Activated CD4-positive, alpha-beta T cell treated with anti-CD3 and anti-CD28 coated beads for 36 hours (primary cell): ENCODE measurements at regions of chr20 and their contacts with region 1.

Region 1: GRCh38 chr20:18137412-18138265 is at the starts of genes KAT14 and PET117:
- DNase-seq: peak; percentile 94
- ATAC-seq: peak; percentile 91
- H3K4me3 Mint-ChIP-seq: peak within 1 kb of the TSS; percentile 74
- H3K27ac Mint-ChIP-seq: peak within 1 kb of the TSS; percentile 89
- H3K4me1 Mint-ChIP-seq: peaks cover 32% of the 10 kb centered on the region
- H3K27me3 Mint-ChIP-seq: peaks cover 1% of the 10 kb centered on the region
- total RNA-seq, gene KAT14: 17.2 to 17.9 TPM
- total RNA-seq, gene PET117: 12.0 to 18.7 TPM

Region 2: GRCh38 chr20:16729565-16730456 is 1407.8 kb before region 1 on chr20 and contains the start of gene SNRPB2:
- CTCF ChIA-PET with region 1: no interaction called
- POLR2A ChIA-PET with region 1: no interaction called
- intact Hi-C with region 1: loop called in 1 of 2 experiments (anchors 2 kb)
- DNase-seq: peak; percentile 95
- ATAC-seq: peak; percentile 95
- H3K4me3 Mint-ChIP-seq: peak within 1 kb of the TSS; percentile 95
- H3K27ac Mint-ChIP-seq: peak within 1 kb of the TSS; percentile 98
- H3K4me1 Mint-ChIP-seq: peaks cover 46% of the 10 kb centered on the region
- H3K27me3 Mint-ChIP-seq: peaks cover 9% of the 10 kb centered on the region
- total RNA-seq, gene SNRPB2: 122 to 129 TPM

Region 3: GRCh38 chr20:17569616-17570346 is 567.9 kb before region 1 on chr20 and contains the start of gene DSTN:
- CTCF ChIA-PET with region 1: no interaction called
- POLR2A ChIA-PET with region 1: no interaction called
- intact Hi-C with region 1: loop called in 1 of 2 experiments (anchors 1 kb)
- DNase-seq: peak; percentile 92
- ATAC-seq: peak; percentile 89
- H3K4me3 Mint-ChIP-seq: peak within 1 kb of the TSS; percentile 88
- H3K27ac Mint-ChIP-seq: peak within 1 kb of the TSS; percentile 88
- H3K4me1 Mint-ChIP-seq: peaks cover 26% of the 10 kb centered on the region
- H3K27me3 Mint-ChIP-seq: peaks cover 7% of the 10 kb centered on the region
- total RNA-seq, gene DSTN: 66.2 to 68.4 TPM

Region 4: DNA sequence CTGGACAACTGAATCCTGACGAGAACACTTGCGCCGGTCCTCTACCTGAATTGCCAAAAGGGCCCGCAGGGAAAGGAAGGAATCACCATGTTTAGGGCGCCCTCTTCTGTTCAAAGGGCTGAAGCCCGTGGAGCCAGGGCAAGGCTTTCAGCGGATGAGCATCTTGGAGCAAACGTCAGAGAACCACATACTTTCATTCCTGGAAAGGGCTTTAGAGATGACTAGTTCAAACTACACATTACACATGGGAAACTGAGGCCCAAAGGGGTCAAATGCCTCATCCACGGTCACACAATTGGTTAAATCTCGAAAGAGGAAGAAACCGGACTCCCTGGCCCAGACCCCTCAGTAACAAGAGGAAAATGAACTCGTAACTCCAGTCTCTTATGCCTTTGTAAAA is 139.2 kb after region 1 on chr20:
- CTCF ChIA-PET with region 1: no interaction called
- POLR2A ChIA-PET with region 1: no interaction called
- intact Hi-C with region 1: loop called (anchors 2 kb)
- DNase-seq: peak; percentile 81
- ATAC-seq: peak; percentile 93
- H3K4me3 Mint-ChIP-seq: no peak overlapping the region
- H3K27ac Mint-ChIP-seq: no peak overlapping the region
- H3K4me1 Mint-ChIP-seq: no peaks in the 10 kb centered on the region
- H3K27me3 Mint-ChIP-seq: peaks cover 33% of the 10 kb centered on the region

Region 5: GRCh38 chr20:18507218-18508021 is 369.8 kb after region 1 on chr20 and contains the start of gene SEC23B:
- CTCF ChIA-PET with region 1: no interaction called
- POLR2A ChIA-PET with region 1: no interaction called
- intact Hi-C with region 1: loop called in 1 of 2 experiments (anchors 2 kb)
- DNase-seq: peak; percentile 99
- ATAC-seq: peak; percentile 94
- H3K4me3 Mint-ChIP-seq: peak within 1 kb of the TSS; percentile 99
- H3K27ac Mint-ChIP-seq: peak within 1 kb of the TSS; percentile 100
- H3K4me1 Mint-ChIP-seq: peaks cover 48% of the 10 kb centered on the region
- H3K27me3 Mint-ChIP-seq: no peaks in the 10 kb centered on the region
- total RNA-seq, gene SEC23B: 95.3 to 119 TPM

Region 6: GRCh38 chr20:18587665-18588573 is 450.3 kb after region 1 on chr20 and contains the start of gene DTD1:
- CTCF ChIA-PET with region 1: no interaction called
- POLR2A ChIA-PET with region 1: no interaction called
- intact Hi-C with region 1: loop called in 1 of 2 experiments (anchors 5 kb)
- DNase-seq: peak; percentile 96
- ATAC-seq: peak; percentile 92
- H3K4me3 Mint-ChIP-seq: peak within 1 kb of the TSS; percentile 89
- H3K27ac Mint-ChIP-seq: peak within 1 kb of the TSS; percentile 82
- H3K4me1 Mint-ChIP-seq: peaks cover 25% of the 10 kb centered on the region
- H3K27me3 Mint-ChIP-seq: peaks cover 6% of the 10 kb centered on the region
- total RNA-seq, gene DTD1: 40.7 to 54.6 TPM